Brain microvascular endothelial cell (primary cell): ENCODE measurements at regions of chr2 and their contacts with region 1.

Region 1: DNA sequence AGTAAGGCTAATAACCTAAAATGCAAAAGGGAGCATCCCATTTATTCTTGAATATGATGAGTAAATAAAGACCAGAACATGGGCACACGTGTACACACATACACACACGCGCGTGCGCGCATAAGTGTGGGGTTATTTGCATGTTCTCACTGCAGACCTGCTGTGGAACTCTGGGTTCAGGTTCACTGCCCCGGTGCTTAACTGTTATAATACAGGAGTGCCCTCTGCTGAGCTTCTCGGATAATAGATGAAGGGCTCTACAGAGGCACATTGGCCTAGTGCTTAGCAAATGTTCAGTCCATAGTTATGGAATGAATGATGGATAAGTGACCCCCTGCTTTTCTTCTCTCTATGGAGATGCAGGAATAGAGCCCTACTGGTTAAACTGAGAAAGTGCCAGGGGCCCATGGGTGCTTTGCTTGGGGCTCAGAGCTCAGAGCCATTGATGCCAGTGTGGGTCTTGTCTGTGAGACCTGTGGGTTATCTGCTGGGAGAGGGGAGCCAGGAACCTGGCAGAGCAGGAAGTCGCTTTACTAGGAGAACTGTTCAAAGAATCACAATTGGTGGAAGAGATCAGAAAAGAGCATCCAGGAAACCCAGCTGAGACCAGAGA is 3.6 kb upstream of the ARL4C start:
- DNase-seq: peak; percentile 72
- H3K4me3 ChIP-seq: no peak overlapping the region
- H3K27ac ChIP-seq: no peak overlapping the region
- H3K27me3 ChIP-seq: no peaks in the 10 kb centered on the region
- CTCF ChIP-seq: peak; percentile 67

Region 2: GRCh38 chr2:234135720-234136221 is 364.7 kb before region 1 on chr2:
- in situ Hi-C with region 1: loop called (anchors 25 kb)
- DNase-seq: peak; percentile 80
- H3K4me3 ChIP-seq: no peak overlapping the region
- H3K27ac ChIP-seq: peak overlapping the region; percentile 63
- H3K27me3 ChIP-seq: no peaks in the 10 kb centered on the region
- CTCF ChIP-seq: peak; percentile 89

Region 3: GRCh38 chr2:234425619-234426603 is 74.6 kb before region 1 on chr2:
- in situ Hi-C with region 1: no loop called
- DNase-seq: no peak
- H3K4me3 ChIP-seq: no peak overlapping the region
- H3K27ac ChIP-seq: no peak overlapping the region
- H3K27me3 ChIP-seq: no peaks in the 10 kb centered on the region
- CTCF ChIP-seq: no peak